Cardiac septum (tissue), 1 donor: ENCODE measurements at regions of chr1 and their contacts with region 1.

Region 1: DNA sequence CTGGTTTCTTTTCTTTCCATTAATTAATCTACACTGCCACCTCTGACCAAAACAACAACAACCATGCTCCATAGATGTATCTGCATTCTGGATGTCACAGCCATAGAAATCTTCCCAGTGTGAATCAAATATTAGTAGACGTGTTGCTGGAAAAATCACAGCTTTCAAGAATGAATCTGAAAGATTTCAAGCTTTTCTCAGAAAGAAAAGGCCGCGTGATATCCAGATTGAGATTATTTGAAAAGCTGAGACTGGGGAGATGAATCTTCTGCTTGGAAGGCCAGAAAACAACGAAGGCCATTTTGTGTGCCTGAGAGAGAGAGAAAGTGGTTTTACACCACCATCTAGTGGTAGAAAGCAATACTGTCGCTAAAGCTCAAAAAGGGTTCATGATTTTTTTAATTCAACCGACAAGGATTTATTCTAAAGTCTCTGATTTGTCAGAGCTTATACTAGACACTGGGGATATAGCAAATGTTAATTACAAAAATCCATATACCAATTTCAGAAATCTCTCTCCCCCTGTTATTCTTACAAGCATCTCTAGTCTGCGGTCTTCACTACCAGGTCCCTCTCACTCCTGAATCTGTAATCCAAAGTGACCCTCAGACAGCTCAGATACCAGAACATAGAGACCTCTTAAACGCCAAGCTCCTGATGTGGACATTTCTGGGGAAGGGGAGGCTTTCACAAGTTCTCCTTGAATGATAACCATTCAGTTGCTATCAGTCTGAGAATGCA is 87.5 kb upstream of the SGIP1 start:
- DNase-seq: no peak

Region 2: GRCh38 chr1:65958561-65959350 is 487.7 kb before region 1 on chr1:
- intact Hi-C with region 1: loop called (anchors 2 kb)
- DNase-seq: no peak

Region 3: GRCh38 chr1:66253330-66253921 is 193.0 kb before region 1 on chr1:
- intact Hi-C with region 1: loop called (anchors 1 kb)
- DNase-seq: no peak

Region 4: GRCh38 chr1:66331657-66332547 is 114.5 kb before region 1 on chr1:
- intact Hi-C with region 1: loop called (anchors 5 kb)
- DNase-seq: peak; percentile 84

Region 5: DNA sequence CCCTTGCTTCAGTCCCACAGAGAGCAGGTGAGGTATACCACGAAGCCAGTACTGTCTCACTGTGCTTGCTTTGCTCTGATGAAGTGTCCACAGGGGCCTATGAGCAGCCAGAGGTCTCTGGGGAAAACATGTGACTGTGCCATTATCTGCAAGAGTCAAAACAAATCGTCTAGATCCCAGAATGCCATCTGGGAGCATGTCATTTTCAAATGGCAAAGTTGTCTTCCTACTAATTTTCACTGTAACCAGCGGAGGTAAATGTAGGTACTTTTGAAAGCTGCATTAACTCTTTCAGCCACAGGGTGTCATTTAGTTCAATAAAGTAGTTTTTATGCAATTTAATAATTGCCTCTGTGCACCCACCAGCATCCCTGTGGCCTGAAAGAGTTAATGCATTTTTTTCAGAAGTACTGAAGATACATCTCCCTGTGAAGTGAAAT is 86.1 kb before region 1 on chr1:
- intact Hi-C with region 1: no loop called
- DNase-seq: no peak

Region 6: DNA sequence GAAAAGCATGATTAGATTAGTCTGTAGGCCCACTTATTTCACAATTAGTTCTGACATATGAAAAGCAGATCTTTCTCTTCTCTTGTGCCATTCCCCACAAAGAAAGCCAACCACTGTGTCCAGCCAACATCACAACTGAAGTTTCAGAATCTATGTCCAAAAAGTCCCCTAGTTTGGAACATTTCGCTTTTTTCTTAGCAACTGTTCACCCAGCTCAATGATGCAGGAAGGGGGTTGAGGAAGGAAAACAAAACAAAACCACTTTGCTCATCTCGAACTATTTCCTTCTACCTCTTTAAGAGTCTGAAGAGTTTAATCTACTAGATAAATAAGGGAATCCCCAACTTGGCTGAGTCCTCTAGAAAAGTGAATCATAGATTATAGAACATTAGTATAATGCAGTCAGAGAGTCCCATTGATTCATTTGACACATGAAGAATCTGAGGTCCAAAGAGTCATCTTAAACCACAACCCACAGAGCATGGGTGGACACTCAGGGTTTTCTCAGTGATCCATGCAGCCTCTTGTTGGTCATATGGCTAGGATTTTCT is 71.8 kb before region 1 on chr1:
- intact Hi-C with region 1: loop called (anchors 5 kb)
- DNase-seq: no peak

Region 7: GRCh38 chr1:66426239-66426853 is 20.1 kb before region 1 on chr1:
- intact Hi-C with region 1: no loop called
- DNase-seq: no peak

Region 8: GRCh38 chr1:66464802-66465201 is 18.4 kb after region 1 on chr1:
- intact Hi-C with region 1: no loop called
- DNase-seq: no peak

Region 9: GRCh38 chr1:66725885-66726665 is 279.6 kb after region 1 on chr1:
- intact Hi-C with region 1: loop called (anchors 5 kb)
- DNase-seq: no peak